Activated CD4-positive, alpha-beta memory T cell treated with anti-CD3 and anti-CD28 coated beads, Interleukin-2, amount 10 ng/mL, durations not matched to agents 7 days and 5 days (primary cell): ENCODE measurements at regions of chr2 and their contacts with region 1.

Region 1: GRCh38 chr2:74178201-74179062 is at the start of gene MOB1A:
- DNase-seq: peak; percentile 99
- H3K4me3 Mint-ChIP-seq: peak within 1 kb of the TSS; percentile 87
- H3K27ac Mint-ChIP-seq: peak within 1 kb of the TSS; percentile 89
- H3K4me1 Mint-ChIP-seq: peaks cover 45% of the 10 kb centered on the region
- H3K27me3 Mint-ChIP-seq: no peaks in the 10 kb centered on the region
- total RNA-seq, gene MOB1A: 188 to 193 TPM

Region 2: GRCh38 chr2:74119912-74120825 is 58.3 kb before region 1 on chr2:
- CTCF ChIA-PET with region 1: interaction called, 5 read pairs
- POLR2A ChIA-PET with region 1: interaction called, 13 read pairs
- DNase-seq: peak; percentile 87
- H3K4me3 Mint-ChIP-seq: peak overlapping the region; percentile 79
- H3K27ac Mint-ChIP-seq: peak overlapping the region; percentile 81
- H3K4me1 Mint-ChIP-seq: peaks cover 16% of the 10 kb centered on the region
- H3K27me3 Mint-ChIP-seq: peaks cover 2% of the 10 kb centered on the region

Region 3: DNA sequence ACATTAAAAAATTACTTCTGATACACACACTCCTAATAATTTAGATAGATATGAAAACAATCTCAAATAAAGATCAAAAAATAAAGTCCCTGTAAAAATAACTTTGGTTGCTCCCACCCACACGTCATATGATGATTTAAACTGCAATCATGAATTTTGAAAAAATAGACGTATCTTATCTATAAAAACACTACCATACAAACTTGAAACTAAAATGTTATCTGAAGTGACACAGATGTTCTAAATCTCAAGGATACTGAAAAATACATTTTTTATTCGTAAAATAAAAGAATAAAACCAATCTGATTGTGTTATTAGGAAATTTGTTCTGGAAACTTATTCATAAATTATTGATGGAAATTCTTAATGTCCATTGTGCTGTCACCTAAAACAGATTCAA is 22.6 kb before region 1 on chr2:
- CTCF ChIA-PET with region 1: interaction called, 32 read pairs
- POLR2A ChIA-PET with region 1: interaction called, 21 read pairs
- DNase-seq: no peak
- H3K4me3 Mint-ChIP-seq: no peak overlapping the region
- H3K27ac Mint-ChIP-seq: no peak overlapping the region
- H3K4me1 Mint-ChIP-seq: peaks cover 7% of the 10 kb centered on the region
- H3K27me3 Mint-ChIP-seq: no peaks in the 10 kb centered on the region

Region 4: DNA sequence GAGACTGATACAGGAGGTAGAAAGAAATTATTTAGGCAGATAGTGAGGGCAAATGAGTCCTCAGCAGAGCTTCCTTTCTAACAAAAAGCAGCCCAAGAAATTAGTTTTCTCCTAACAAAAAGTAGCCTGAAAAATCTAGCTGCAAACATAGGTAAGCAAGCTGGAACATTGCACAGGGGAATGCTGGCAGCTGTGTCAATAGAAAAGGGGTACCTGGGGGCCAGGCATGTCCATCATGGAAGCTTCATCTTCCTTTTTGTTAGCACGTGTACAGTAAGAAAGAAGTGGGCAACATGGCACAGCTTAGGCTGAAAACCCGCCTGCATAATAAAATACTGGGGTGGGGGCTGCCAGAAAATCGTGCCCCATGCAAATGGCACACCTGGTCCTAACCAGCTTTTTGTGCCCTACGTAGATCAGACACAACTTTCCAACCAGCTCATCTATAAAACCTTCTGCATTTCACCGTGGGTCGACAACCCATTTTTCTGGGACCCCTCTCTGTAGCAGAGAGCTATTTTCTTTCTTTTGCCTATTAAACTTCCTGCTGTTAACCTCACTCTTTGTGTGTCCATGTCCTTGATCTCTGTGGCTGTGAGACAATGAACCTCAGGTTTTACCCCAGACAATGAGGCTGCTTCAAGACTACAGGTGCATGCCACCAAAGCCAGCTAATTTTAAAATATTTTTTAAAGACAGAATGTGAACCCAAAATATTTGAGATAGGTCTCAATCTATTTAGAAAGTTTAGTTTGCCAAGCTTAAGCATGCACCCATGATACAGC is 13.4 kb after region 1 on chr2:
- CTCF ChIA-PET with region 1: interaction called, 100 read pairs
- POLR2A ChIA-PET with region 1: interaction called, 262 read pairs
- DNase-seq: no peak
- H3K4me3 Mint-ChIP-seq: no peak overlapping the region
- H3K27ac Mint-ChIP-seq: no peak overlapping the region
- H3K4me1 Mint-ChIP-seq: peaks cover 10% of the 10 kb centered on the region
- H3K27me3 Mint-ChIP-seq: peaks cover 10% of the 10 kb centered on the region

Region 5: DNA sequence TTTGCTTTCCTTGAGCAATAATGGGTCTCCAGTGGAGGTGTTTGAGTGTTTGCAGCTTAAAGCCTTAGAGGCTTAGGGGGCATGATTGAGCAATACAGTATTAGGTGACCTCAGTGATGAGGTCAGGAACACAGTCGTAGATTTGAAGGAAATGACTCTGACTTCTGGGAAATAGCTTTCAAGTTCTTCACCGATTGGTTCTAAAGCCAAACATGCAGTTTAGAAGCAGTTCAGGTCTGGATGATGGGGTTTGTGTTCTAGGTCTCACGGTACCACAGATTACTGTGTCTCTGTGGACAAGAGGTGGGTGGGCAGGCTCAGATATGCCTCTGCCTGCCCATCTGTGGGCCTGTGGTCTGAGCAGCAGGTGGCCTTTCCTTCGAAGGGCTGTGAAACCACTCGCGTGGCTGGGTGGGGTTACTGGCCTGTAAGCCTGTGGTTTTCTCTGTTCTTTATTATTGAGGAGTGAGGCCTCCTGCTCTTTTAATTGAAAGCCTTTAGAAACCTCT is 27.8 kb after region 1 on chr2:
- CTCF ChIA-PET with region 1: interaction called, 100 read pairs
- POLR2A ChIA-PET with region 1: interaction called, 262 read pairs
- DNase-seq: peak; percentile 67
- H3K4me3 Mint-ChIP-seq: peak overlapping the region; percentile 64
- H3K27ac Mint-ChIP-seq: peak overlapping the region; percentile 96
- H3K4me1 Mint-ChIP-seq: peaks cover 78% of the 10 kb centered on the region
- H3K27me3 Mint-ChIP-seq: no peaks in the 10 kb centered on the region

Region 6: GRCh38 chr2:74238879-74239278 is 60.4 kb after region 1 on chr2:
- CTCF ChIA-PET with region 1: no interaction called
- POLR2A ChIA-PET with region 1: no interaction called
- DNase-seq: no peak
- H3K4me3 Mint-ChIP-seq: no peak overlapping the region
- H3K27ac Mint-ChIP-seq: no peak overlapping the region
- H3K4me1 Mint-ChIP-seq: no peaks in the 10 kb centered on the region
- H3K27me3 Mint-ChIP-seq: no peaks in the 10 kb centered on the region